ENCODE measurements at regions of chr9 and their contacts with region 1.

Region 1: GRCh38 chr9:19184144-19184917 is 46.2 kb upstream of the DENND4C start:
- DNase-seq: peak; percentile 90
- ATAC-seq: peak; percentile 100
- H3K4me3 Mint-ChIP-seq: peak overlapping the region; percentile 60
- H3K27ac Mint-ChIP-seq: peak overlapping the region; percentile 94
- H3K4me1 Mint-ChIP-seq: peaks cover 27% of the 10 kb centered on the region
- H3K27me3 Mint-ChIP-seq: no peaks in the 10 kb centered on the region

Region 2: GRCh38 chr9:18996201-18996600 is 188.1 kb before region 1 on chr9:
- CTCF ChIA-PET with region 1: no interaction called
- POLR2A ChIA-PET with region 1: no interaction called
- DNase-seq: no peak
- ATAC-seq: no peak
- H3K4me3 Mint-ChIP-seq: no peak overlapping the region
- H3K27ac Mint-ChIP-seq: no peak overlapping the region
- H3K4me1 Mint-ChIP-seq: no peaks in the 10 kb centered on the region
- H3K27me3 Mint-ChIP-seq: no peaks in the 10 kb centered on the region

Region 3: GRCh38 chr9:19048966-19049916 is 135.1 kb before region 1 on chr9 and contains the start of gene RRAGA:
- CTCF ChIA-PET with region 1: interaction called, 10 read pairs
- POLR2A ChIA-PET with region 1: interaction called, 6 read pairs
- DNase-seq: peak; percentile 95
- ATAC-seq: peak; percentile 92
- H3K4me3 Mint-ChIP-seq: peak within 1 kb of the TSS; percentile 90
- H3K27ac Mint-ChIP-seq: peak within 1 kb of the TSS; percentile 99
- H3K4me1 Mint-ChIP-seq: peaks cover 30% of the 10 kb centered on the region
- H3K27me3 Mint-ChIP-seq: no peaks in the 10 kb centered on the region
- total RNA-seq, gene RRAGA: 44.7 to 46.0 TPM

Region 4: DNA sequence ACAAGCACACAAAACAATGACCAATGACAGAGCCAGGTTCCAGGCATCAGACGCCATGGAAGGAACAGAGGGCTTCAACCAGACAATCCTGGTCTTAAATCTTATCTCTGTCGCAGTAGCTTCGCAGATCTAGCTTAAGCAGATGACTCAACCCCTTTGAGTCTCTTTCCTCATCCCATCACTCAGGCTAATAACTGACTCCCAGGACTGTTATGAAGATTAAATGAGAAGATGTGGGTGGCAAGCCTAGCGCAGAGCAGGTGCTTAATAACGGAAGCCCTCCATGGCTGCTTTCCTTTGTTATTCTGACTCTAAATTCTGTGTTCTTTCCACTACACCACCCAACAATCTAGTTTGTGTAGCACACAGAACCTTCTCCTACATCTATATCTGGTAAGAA is 493.6 kb after region 1 on chr9:
- CTCF ChIA-PET with region 1: no interaction called
- POLR2A ChIA-PET with region 1: no interaction called
- DNase-seq: no peak
- ATAC-seq: no peak
- H3K4me3 Mint-ChIP-seq: no peak overlapping the region
- H3K27ac Mint-ChIP-seq: no peak overlapping the region
- H3K4me1 Mint-ChIP-seq: no peaks in the 10 kb centered on the region
- H3K27me3 Mint-ChIP-seq: peaks cover 4% of the 10 kb centered on the region